ENCODE measurements at regions of chr12 and their contacts with region 1.

Region 1: DNA sequence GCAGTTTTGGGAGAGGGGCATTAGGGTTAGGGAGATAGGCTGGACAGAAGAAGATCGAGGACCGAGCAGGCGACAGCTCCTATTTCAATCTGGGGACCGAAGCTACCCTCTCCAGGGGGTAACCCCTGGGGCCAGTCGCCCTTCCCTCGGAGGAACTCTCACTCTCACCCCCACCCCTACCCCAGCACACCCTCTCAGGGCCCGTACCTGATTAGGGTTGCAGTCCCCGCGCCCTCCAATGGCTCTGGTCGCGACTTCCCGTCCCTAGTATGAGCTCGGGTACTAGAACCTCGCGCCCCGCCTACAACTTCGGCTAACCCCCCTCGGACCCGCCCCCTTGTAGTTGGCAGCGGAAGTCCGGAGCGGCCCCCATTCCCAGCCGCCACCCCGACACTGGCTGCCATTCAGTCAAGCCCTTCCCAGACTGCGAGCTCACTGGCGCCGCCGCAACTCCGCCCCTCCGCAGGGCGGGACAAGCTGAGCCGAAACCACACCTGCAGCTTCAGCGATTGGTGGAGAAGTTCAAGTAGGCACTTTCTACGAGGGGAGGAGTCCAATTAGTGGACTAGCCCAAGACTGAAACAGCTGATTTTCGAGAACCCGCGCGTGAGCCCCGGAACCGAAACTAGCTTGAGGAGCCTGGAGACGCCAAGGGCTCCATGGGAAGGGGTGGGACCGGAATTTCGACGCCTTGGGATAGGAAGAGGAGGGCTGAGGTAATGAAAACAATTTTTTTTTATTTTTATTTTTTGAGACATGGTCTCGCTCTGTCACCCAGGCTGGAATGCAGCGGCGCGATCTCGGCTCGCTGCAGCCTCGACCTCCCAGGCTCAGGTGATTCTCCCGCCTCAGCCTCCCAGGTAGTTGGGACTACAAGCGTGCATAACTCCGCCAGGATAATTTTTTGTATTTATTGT is at the start of gene STAT2:
- DNase-seq: peak; percentile 100
- total RNA-seq, gene STAT2: 108 to 113 TPM

Region 2: DNA sequence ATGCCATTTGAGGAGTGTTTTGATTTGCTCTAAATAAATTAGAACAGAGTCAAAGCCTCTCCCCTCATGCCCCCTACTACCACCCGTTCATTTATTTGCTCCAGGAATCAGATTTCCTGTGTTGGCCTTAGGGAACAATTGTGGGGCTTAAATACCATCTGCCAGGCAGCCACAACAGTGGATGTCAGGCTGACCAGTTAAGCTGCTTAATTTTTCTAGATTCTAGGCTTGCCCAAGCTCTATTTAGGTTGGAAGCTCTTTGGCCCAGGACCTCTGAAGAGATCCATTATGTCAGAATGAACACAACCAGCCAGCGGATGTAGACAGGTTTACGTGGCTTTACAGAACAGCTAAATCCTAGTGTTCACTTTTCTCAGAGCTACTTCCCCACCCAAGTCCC is 90.1 kb after region 1 on chr12:
- intact Hi-C with region 1: loop called in 1 of 2 experiments (anchors 10 kb)
- DNase-seq: no peak

Region 3: DNA sequence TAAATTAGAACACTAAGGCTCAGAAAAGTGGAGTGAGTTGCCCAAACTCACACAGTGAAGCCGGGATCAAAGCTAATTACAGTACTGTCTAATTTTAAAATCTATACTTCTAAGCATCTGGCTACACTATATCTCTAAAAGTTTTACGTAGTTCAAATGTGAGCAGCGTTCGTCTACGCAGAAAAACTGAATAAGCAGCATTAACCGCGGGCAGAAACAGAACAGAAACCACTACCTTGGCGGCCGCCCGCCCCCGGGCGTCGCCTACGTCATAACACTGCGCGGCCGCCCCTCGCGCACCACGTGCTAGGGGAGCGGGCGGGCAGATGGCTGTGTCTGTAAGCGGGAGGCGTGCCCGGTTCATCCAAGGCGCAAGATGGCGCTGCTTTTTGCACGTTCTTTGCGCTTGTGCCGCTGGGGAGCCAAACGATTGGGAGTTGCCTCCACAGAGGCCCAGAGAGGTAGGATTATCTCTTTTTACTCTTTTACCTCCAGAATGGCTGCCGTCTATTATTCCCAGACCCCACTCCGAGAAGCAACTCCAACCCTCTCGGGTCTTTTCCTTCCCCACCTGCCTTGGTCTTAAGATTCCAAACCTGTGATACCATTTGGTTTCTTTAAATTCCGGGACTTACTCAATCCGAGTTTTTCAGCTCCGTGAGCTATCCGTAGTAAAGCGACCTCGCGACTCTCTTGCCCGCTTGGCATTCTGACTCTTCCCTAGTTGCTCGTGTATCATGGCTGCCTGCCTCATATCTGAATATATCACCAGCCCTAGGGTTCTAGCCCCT is 108.3 kb after region 1 on chr12 and contains the start of gene SPRYD4:
- intact Hi-C with region 1: no loop called
- DNase-seq: peak; percentile 98
- total RNA-seq, gene SPRYD4: 1.7 to 2.3 TPM

Region 4: GRCh38 chr12:56987551-56988053 is 627.5 kb after region 1 on chr12:
- intact Hi-C with region 1: no loop called
- DNase-seq: peak; percentile 96